ENCODE measurements at regions of chr20 and their contacts with region 1.

Region 1: GRCh38 chr20:44310664-44311639 is at the start of gene FITM2:
- DNase-seq: peak; percentile 98
- H3K4me3 ChIP-seq: peak within 1 kb of the TSS; percentile 94 to 97
- H3K27ac ChIP-seq: peak within 1 kb of the TSS; percentile 48 to 72
- H3K4me1 ChIP-seq: peaks cover 13% of the 10 kb centered on the region
- H3K27me3 ChIP-seq: no peaks in the 10 kb centered on the region
- CTCF ChIP-seq: peak; percentile 94 to 99 (median 98)
- POLR2A ChIP-seq: no peak
- total RNA-seq, gene FITM2: 21.5 to 22.9 TPM

Region 2: GRCh38 chr20:44104798-44105517 is 206.0 kb before region 1 on chr20:
- intact Hi-C with region 1: no loop called
- DNase-seq: no peak
- H3K4me3 ChIP-seq: no peak overlapping the region
- H3K27ac ChIP-seq: no peak overlapping the region
- H3K4me1 ChIP-seq: no peaks in the 10 kb centered on the region
- H3K27me3 ChIP-seq: no peaks in the 10 kb centered on the region
- CTCF ChIP-seq: no peak
- POLR2A ChIP-seq: no peak

Region 3: DNA sequence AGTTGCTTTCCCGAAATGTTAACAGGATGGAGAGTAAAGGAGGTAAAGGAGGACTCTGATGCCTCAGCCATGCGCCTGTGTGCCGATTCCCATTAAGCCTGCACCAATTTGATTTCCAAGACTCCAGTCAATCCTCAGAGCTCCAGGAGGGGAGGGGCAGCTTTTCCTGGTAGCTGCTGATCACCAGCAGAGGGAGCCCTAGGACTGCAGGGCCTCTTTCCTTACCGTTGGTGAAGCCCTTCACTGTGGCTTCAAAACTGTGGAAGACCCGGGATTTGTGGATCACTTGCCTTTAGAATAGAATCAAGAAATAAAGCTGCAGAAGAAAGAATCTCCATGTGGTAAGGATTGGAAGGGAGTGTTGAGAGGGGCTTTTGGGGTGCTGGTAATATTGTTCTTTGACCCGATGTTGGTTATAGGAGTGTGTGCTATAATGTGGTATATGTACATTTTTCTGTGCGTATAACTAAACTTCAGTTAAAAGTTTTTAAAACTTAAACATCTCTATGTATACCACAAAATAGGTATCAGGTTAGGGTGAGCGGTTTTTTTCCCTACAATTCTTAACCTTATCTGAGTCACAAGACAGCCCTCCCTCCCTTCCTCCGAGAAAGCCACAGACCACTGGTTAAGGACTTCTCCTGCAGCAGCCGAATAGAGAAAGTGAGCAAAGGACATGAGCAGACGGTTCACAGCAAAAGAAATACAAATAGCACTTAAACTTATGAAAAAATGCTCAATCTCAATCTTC is 93.4 kb before region 1 on chr20:
- intact Hi-C with region 1: loop called (anchors 5 kb)
- DNase-seq: peak; percentile 86
- H3K4me3 ChIP-seq: no peak overlapping the region
- H3K27ac ChIP-seq: no peak overlapping the region
- H3K4me1 ChIP-seq: peaks cover 9% of the 10 kb centered on the region
- H3K27me3 ChIP-seq: no peaks in the 10 kb centered on the region
- CTCF ChIP-seq: peak; percentile 68 to 75 (median 68)
- POLR2A ChIP-seq: no peak

Region 4: DNA sequence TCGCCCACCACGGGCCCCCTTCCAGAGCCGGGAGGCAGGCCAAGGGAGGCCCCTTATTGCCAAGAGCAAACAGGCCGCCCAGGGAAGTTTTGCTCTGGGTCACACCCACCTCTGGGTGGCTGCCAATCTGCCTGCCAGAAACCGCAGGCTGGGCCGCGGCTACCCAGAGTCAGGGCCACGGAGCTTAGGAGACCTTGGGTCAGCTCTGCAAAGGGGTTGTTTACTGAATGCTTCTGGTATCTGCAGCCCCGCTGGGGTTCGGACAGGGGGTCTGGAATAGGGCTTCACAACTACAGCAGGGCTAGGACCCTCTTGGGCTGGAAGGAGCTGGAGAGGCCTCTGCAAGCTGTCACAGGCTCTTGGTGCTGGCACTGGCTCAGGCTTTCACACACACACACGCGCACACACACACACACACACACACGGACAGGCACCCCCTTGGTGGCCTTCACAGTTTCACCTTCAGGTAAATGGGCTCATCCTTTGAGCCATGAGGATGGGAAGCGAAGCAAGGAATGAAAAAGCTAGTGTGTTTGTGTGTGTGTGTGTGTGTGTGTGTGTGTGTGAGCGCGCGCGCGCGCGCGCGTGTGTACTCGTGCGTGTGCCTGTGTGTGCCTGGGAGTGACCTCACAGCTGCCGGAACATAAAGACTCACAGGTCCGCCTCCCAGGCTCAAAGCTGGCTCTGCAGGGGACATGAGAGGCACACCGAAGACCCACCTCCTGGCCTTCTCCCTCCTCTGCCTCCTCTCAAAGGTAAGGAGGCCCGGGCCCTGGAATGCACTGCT is 403.9 kb after region 1 on chr20 and contains the start of gene CCN5:
- intact Hi-C with region 1: no loop called
- DNase-seq: peak; percentile 88
- H3K4me3 ChIP-seq: peak within 1 kb of the TSS; percentile 18 to 29
- H3K27ac ChIP-seq: peak within 1 kb of the TSS; percentile 57 to 79
- H3K4me1 ChIP-seq: peaks cover 18% of the 10 kb centered on the region
- H3K27me3 ChIP-seq: no peaks in the 10 kb centered on the region
- CTCF ChIP-seq: no peak
- POLR2A ChIP-seq: no peak
- total RNA-seq, gene CCN5: 37.0 to 152 TPM